Activated CD4-positive, alpha-beta T cell treated with anti-CD3 and anti-CD28 coated beads for 36 hours (primary cell): ENCODE measurements at regions of chr12 and their contacts with region 1.

Region 1: DNA sequence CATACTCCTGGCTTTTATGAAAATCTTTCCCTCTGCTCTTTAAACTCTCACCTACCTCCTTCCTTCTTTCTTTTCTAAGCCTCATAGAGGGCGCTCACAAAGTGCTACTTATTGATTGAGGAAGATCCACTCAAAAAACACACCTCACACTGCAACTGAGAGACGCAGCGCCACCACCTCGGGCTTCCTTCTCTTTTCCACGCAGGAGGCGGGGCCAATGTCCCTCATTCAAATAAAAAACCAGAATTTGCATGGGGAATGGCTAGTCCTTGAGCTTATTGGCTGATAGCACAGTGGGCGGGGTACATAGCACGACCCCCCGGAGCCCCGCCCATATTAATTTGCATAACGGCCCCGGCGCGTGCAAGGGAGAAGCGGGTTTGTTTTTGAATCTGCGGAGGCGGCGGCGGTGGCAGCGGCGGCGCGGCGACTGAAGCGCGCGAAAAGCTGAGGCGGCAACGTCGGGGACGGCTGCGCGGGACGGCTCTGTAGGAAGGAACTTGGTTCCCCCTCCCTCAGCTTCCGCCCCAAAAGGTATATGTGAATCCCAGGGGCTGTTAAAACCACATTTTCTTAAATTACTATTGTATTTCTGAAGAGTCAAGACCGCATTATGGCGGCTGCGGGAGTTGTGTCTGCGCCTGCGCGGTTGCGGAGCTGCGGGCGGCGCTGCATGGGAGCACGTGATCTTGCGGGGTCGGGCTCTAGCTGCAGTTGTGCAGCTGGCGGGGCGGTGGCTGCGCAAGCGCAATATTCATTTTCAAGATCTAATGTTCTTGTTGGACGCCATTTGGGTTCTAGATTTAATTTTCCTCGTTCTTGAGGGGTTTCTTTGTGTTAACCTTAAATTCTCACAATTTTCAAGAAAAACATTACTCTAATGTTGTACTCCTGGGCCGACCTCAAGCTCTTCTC is at the start of gene ATF7IP:
- DNase-seq: peak; percentile 97
- ATAC-seq: peak; percentile 85
- H3K4me3 Mint-ChIP-seq: peak within 1 kb of the TSS; percentile 76
- H3K27ac Mint-ChIP-seq: peak within 1 kb of the TSS; percentile 98
- H3K4me1 Mint-ChIP-seq: peaks cover 33% of the 10 kb centered on the region
- H3K27me3 Mint-ChIP-seq: no peaks in the 10 kb centered on the region
- total RNA-seq, gene ATF7IP: 81.3 to 101 TPM

Region 2: DNA sequence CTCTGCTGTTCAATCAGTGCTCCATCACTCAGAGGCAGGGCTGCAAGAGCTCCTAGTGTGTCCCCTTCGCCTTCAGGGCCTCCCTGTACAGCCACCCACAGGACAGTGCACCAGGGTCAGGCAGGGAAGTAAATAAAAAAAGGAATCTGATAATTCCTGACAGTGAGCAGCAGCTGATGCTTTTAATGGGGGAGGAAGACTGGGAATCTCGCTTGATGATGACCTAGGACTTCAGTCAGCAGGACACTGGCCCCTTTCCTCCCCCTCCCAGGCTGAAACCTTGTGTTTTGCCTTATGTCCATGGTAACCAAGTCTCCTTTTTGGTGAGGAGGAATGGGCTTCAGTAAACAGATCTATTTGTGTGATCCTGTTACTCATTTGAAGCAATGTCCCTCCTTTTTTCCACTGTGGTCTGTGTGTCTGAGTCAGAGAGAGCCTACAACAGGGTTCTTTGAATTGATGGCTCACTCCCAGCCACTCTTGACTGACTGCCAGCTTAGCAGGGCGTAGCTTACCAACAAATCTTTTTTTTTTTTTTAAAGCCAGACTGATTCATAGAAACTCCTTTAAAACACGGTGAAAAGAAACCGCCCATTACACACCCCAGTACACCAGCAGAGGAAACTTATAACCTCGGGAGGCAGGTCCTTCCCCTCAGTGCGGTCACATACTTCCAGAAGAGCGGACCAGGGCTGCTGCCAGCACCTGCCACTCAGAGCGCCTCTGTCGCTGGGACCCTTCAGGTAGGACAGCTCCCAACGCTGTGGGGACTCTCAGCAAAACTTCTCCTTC is 1169.2 kb before region 1 on chr12 and contains the start of gene EMP1:
- CTCF ChIA-PET with region 1: no interaction called
- POLR2A ChIA-PET with region 1: no interaction called
- intact Hi-C with region 1: loop called in 1 of 2 experiments (anchors 10 kb)
- DNase-seq: peak; percentile 89
- ATAC-seq: peak; percentile 97
- H3K4me3 Mint-ChIP-seq: peak within 1 kb of the TSS; percentile 82
- H3K27ac Mint-ChIP-seq: peak within 1 kb of the TSS; percentile 83
- H3K4me1 Mint-ChIP-seq: peaks cover 32% of the 10 kb centered on the region
- H3K27me3 Mint-ChIP-seq: no peaks in the 10 kb centered on the region
- total RNA-seq, gene EMP1: 12.9 to 16.6 TPM

Region 3: DNA sequence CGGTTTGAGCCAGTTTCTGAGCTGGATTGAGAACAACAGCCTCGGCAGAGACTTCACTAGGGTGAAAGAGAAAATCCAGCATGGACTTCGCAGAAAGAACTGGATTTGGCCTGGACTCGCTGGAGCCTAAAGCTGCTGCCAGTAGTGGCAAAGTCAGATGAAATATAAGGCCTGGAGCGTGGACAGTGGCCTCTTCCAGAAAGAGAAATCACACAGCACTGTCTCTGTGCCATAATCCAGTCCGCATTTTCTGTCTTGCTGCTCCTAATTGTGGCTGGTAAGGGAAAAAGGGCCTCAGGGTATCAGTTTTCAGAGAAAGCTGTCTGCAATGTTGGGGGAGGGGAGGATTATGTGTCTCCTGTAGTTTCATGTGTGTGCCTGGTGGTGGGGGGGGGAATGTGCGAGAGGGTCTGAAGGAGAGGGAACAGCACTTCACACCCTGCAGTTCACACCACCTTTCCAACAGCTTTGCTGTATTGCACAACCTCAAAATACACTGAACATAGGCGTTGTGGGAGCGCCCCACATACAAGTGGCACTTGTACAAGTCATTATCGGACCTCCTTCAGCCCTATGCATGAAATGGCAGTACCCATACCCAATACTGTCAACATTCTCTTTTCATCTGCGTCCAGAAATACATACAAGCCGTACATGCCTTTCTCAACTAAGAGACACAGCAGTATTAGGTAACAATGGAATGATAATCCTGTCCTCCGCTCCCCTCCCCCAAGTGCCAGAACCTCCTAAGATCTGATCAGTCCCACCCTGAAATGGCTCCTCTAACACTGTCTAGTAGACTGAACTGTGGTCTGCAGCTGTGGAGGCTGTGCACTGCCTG is 107.6 kb before region 1 on chr12:
- CTCF ChIA-PET with region 1: interaction called, 16 read pairs
- POLR2A ChIA-PET with region 1: interaction called, 15 read pairs
- intact Hi-C with region 1: loop called (anchors 1 kb)
- DNase-seq: peak; percentile 95
- ATAC-seq: peak; percentile 78
- H3K4me3 Mint-ChIP-seq: peak overlapping the region; percentile 66
- H3K27ac Mint-ChIP-seq: peak overlapping the region; percentile 99
- H3K4me1 Mint-ChIP-seq: peaks cover 48% of the 10 kb centered on the region
- H3K27me3 Mint-ChIP-seq: no peaks in the 10 kb centered on the region

Region 4: DNA sequence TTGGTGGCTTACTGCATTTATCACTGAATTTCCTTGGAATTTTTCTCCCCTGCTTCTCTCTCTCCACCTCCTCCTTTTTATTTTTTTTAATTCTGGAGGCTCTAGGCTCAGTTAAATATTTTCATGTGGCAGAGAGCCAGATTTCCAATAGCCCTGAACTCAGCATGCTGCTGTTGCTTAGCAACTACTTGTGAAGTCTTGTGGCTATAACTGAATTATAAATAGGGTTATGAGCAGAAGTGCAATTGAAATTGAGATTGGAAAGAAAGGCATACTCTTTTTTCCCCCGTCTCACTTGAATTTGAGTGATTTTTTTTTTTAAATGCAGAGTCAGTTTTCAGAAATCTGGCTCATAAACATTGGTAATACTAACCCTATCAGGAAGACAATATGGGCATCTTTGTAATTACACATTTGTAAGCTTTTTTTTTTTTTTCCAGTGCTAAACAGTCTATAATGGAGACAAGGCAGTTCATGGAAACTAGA is 38.2 kb after region 1 on chr12:
- CTCF ChIA-PET with region 1: interaction called, 7 read pairs
- POLR2A ChIA-PET with region 1: no interaction called
- intact Hi-C with region 1: loop called in 1 of 2 experiments (anchors 1 kb)
- DNase-seq: no peak
- ATAC-seq: peak; percentile 39
- H3K4me3 Mint-ChIP-seq: peak overlapping the region; percentile 33
- H3K27ac Mint-ChIP-seq: peak overlapping the region; percentile 83
- H3K4me1 Mint-ChIP-seq: peaks cover 77% of the 10 kb centered on the region
- H3K27me3 Mint-ChIP-seq: no peaks in the 10 kb centered on the region

Region 5: DNA sequence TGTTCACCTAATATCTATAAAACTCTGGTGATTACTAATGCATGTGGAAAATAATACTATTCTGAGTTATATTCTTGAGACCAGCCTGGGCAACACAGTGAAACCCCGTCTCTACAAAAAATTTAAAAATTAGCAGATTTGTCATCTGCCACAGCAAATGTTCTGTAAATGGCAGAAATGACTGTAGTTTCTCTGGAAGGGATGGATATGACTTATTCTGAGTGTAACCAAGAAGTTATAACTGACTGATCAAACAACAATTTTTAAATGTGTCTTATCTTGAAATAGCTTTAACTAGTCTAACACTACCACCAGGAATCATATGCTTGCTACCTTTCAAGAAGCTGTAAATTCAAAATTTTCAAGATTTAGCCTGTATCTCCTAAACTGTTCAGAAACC is 113.5 kb after region 1 on chr12:
- CTCF ChIA-PET with region 1: interaction called, 3 read pairs
- POLR2A ChIA-PET with region 1: no interaction called
- intact Hi-C with region 1: loop called in 1 of 2 experiments (anchors 5 kb)
- DNase-seq: no peak
- ATAC-seq: peak; percentile 91
- H3K4me3 Mint-ChIP-seq: no peak overlapping the region
- H3K27ac Mint-ChIP-seq: peak overlapping the region; percentile 51
- H3K4me1 Mint-ChIP-seq: peaks cover 19% of the 10 kb centered on the region
- H3K27me3 Mint-ChIP-seq: no peaks in the 10 kb centered on the region

Region 6: DNA sequence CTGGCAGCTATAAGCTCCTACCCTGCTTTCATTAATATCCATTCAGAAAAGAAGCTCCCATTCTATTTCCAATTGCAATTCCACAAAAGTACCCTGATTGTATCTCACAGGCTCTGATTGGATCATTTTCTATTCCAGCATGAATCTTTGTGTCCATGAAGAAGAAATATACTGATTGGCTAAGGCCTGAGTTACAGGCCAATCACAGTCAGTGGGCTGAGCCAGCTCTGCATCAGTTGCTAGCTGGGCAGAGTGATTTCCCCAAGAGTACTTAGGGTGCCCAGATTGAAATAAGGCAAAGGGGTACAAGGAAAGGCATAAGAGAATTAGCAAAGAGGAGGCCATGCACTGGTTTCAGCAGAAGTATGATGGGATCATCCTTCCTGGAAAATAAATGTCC is 463.3 kb after region 1 on chr12:
- CTCF ChIA-PET with region 1: no interaction called
- POLR2A ChIA-PET with region 1: no interaction called
- intact Hi-C with region 1: no loop called
- DNase-seq: peak; percentile 13
- ATAC-seq: peak; percentile 60
- H3K4me3 Mint-ChIP-seq: no peak overlapping the region
- H3K27ac Mint-ChIP-seq: no peak overlapping the region
- H3K4me1 Mint-ChIP-seq: peaks cover 14% of the 10 kb centered on the region
- H3K27me3 Mint-ChIP-seq: peaks cover 5% of the 10 kb centered on the region

Region 7: DNA sequence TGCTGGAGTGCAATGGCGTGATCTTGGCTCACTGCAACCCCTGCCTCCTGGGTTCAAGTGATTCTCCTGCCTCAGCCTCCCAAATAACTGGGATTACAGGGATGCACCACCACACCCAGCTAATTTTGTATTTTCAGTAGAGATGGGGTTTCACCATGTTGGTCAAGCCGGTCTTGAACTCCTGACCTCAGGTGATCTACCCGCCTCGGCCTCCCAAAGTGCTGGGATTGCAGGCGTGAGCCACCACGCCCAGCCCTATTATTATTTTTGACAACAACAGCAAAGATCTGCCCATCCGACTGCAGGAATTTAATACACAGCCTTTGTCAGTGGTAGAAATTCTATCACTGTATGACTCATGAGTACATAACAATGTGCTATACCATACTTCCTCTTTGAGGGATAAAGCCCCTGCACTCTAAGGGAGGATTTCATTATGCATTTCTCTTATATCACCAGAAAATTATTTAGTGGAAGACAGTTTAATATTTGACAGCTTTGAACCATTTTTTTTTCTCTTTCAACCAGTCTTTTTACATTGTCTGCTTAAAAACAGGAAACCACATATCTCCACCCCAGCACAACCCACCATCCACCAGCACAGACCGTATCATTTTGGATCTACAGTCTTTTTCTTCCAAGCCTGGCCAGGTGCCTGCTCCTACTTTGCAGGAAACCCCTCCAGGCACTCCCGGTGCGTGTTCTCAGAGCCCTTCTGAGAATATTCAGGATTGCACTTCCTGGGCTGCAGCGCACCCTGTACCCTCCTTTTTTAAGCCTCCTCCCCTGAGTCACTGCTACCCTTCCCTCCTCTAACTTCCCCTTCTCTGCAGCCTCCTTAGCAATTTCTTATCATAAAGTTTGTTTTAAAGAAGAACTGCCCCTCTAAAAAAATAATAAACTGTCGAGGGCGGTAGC is 595.3 kb after region 1 on chr12:
- CTCF ChIA-PET with region 1: no interaction called
- POLR2A ChIA-PET with region 1: interaction called, 3 read pairs
- intact Hi-C with region 1: loop called in 1 of 2 experiments (anchors 5 kb)
- DNase-seq: peak; percentile 56
- ATAC-seq: peak; percentile 53
- H3K4me3 Mint-ChIP-seq: peak overlapping the region; percentile 96
- H3K27ac Mint-ChIP-seq: peak overlapping the region; percentile 99
- H3K4me1 Mint-ChIP-seq: peaks cover 55% of the 10 kb centered on the region
- H3K27me3 Mint-ChIP-seq: no peaks in the 10 kb centered on the region